ENCODE measurements at regions of chr11 and their contacts with region 1.

Region 1: GRCh38 chr11:102580185-102580951 is 44.8 kb downstream of the MMP20 start:
- DNase-seq: peak; percentile 30
- H3K4me3 Mint-ChIP-seq: no peak overlapping the region
- H3K27ac Mint-ChIP-seq: peak overlapping the region; percentile 15
- H3K4me1 Mint-ChIP-seq: peaks cover 29% of the 10 kb centered on the region
- H3K27me3 Mint-ChIP-seq: no peaks in the 10 kb centered on the region

Region 2: GRCh38 chr11:102109896-102110760 is 470.2 kb before region 1 on chr11 and contains the start of gene YAP1:
- CTCF ChIA-PET with region 1: no interaction called
- intact Hi-C with region 1: loop called (anchors 5 kb)
- DNase-seq: peak; percentile 70
- H3K4me3 Mint-ChIP-seq: peak within 1 kb of the TSS; percentile 94
- H3K27ac Mint-ChIP-seq: no peak within 1 kb of the TSS
- H3K4me1 Mint-ChIP-seq: peaks cover 9% of the 10 kb centered on the region
- H3K27me3 Mint-ChIP-seq: peaks cover 39% of the 10 kb centered on the region
- total RNA-seq, gene YAP1: 1.1 to 1.5 TPM

Region 3: GRCh38 chr11:102430158-102430836 is 150.1 kb before region 1 on chr11:
- CTCF ChIA-PET with region 1: no interaction called
- intact Hi-C with region 1: no loop called
- DNase-seq: peak; percentile 86
- H3K4me3 Mint-ChIP-seq: peak overlapping the region; percentile 44
- H3K27ac Mint-ChIP-seq: peak overlapping the region; percentile 95
- H3K4me1 Mint-ChIP-seq: peaks cover 75% of the 10 kb centered on the region
- H3K27me3 Mint-ChIP-seq: no peaks in the 10 kb centered on the region

Region 4: DNA sequence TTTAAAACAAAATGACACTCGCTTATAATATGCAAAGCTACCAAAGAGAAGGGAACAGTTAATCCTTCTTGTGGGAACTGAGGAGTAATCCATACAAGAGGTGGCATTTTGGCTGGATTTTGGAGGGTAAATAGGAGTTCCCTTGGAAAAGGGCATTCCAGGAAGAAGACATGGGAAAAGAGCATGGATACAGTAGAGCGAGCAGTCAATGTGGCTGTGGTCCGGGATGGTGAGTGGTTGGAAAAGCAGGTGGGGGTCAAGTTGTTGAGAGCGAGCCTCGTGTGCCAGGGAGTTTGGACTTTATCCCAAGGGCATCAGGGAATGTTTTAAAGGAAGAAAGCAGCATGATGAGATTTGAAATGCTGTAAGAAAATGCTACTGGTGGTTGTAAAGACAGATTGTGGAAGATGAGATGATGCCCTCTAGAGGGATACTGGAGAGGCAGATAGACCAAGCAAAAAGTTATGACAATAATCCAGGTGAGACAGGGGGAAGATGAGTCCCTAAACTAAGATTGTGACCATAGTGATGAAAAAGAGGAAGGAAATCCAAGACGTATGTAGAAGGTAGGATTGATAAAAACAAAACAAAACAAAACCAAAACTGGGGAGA is 46.0 kb before region 1 on chr11:
- CTCF ChIA-PET with region 1: no interaction called
- intact Hi-C with region 1: no loop called
- DNase-seq: no peak
- H3K4me3 Mint-ChIP-seq: no peak overlapping the region
- H3K27ac Mint-ChIP-seq: no peak overlapping the region
- H3K4me1 Mint-ChIP-seq: peaks cover 7% of the 10 kb centered on the region
- H3K27me3 Mint-ChIP-seq: peaks cover 2% of the 10 kb centered on the region

Region 5: GRCh38 chr11:102592634-102593581 is 12.5 kb after region 1 on chr11:
- CTCF ChIA-PET with region 1: interaction called, 4 read pairs
- intact Hi-C with region 1: loop called (anchors 1 kb)
- DNase-seq: no peak
- H3K4me3 Mint-ChIP-seq: no peak overlapping the region
- H3K27ac Mint-ChIP-seq: no peak overlapping the region
- H3K4me1 Mint-ChIP-seq: peaks cover 19% of the 10 kb centered on the region
- H3K27me3 Mint-ChIP-seq: no peaks in the 10 kb centered on the region

Region 6: DNA sequence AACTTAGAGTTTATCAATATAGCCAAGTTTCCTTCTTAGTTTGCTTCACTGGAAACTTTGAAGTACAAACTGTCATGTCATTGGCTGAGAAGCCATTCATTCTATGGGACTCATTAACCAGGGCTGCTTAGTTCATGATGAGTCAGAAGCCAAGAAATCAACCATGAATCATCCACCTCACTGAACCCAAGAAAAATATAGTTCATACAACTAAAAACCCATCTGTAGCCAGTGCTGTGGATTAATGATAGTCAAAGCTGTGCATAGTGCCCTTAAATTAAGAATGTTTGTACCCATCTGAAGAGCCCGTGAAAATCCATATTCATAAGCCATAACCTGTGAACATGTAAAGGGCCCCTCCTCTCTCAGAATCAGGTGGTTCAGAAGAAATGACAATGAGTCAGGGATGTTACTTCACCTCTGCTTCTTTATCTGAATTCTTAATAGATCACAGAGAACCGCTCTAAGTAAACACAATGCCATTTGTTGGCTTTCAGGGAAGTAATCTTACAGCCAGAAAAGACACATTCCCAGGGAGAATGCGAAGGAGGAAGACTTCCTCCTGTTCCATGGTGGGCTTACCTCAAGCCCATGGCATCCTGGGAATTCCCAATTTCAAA is 19.4 kb after region 1 on chr11:
- CTCF ChIA-PET with region 1: interaction called, 4 read pairs
- intact Hi-C with region 1: loop called (anchors 1 kb)
- DNase-seq: peak; percentile 43
- H3K4me3 Mint-ChIP-seq: no peak overlapping the region
- H3K27ac Mint-ChIP-seq: peak overlapping the region; percentile 75
- H3K4me1 Mint-ChIP-seq: peaks cover 27% of the 10 kb centered on the region
- H3K27me3 Mint-ChIP-seq: no peaks in the 10 kb centered on the region